Dendritic cell treated with granulocyte-macrophage colony-stimulating factor and Interleukin-4, amounts not matched to agents 40 ng/mL and 50 ng/mL, for 4 days (primary cell): ENCODE measurements at regions of chr20 and their contacts with region 1.

Region 1: GRCh38 chr20:46307139-46307998 is 929 bp downstream of the CDH22 start:
- H3K4me3 Mint-ChIP-seq: no peak overlapping the region
- H3K27ac Mint-ChIP-seq: no peak overlapping the region
- H3K4me1 Mint-ChIP-seq: peaks cover 9% of the 10 kb centered on the region
- H3K27me3 Mint-ChIP-seq: peaks cover 84% of the 10 kb centered on the region

Region 2: DNA sequence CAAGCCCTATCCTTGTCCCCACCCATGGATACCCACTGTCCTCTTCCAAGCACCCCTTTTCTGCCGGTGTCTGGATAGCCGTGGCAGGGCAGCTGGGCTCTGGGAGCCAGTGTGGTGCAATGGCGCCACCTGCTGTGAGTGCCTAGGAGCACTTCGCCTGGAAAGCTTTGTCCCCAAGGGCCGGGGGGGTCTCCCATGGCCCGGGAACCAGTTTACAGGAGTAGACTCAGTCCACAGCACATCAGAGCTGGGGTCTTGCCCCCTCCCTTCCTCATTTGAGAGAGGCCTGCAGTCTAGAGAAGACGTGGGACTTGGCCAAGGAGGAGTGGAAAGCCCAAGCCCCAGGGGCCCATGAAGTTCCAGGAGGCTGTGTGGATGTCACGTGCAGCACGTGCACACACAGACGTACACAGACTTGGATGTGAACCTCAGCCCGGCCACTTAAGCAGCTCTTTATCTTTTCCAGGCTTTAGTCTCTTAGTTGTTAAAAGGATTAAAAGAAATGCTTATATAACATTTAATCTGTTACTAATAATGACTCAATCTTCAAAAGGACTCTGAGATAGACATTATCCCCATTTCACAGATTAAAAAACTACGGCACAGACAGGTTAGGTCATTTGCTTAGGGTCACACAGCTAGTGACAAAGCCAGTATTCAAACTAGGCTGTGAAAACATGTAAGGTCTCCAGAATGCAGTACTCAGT is 41.8 kb after region 1 on chr20:
- intact Hi-C with region 1: loop called (anchors 1 kb)
- H3K4me3 Mint-ChIP-seq: no peak overlapping the region
- H3K27ac Mint-ChIP-seq: no peak overlapping the region
- H3K4me1 Mint-ChIP-seq: peaks cover 54% of the 10 kb centered on the region
- H3K27me3 Mint-ChIP-seq: peaks cover 9% of the 10 kb centered on the region

Region 3: DNA sequence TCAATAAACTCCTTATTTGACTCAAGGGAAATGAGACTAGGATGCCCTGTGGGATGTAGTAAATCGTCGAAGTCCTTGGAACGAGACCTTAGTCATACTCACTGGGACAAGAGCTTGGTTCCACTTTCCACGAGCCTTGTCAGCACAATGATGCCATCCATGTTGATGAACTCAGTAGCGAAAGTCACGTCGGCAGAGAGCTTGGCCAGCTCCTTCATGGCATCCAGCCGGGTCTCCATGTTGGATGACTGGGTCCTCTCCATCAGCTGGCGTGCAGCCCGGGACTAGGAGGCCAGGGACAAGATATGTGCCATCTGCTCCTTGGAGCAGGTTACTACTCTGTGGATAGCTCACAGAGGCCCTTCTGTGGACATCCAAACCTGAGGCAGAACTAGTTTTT is 81.6 kb after region 1 on chr20:
- intact Hi-C with region 1: no loop called
- H3K4me3 Mint-ChIP-seq: no peak overlapping the region
- H3K27ac Mint-ChIP-seq: no peak overlapping the region
- H3K4me1 Mint-ChIP-seq: no peaks in the 10 kb centered on the region
- H3K27me3 Mint-ChIP-seq: no peaks in the 10 kb centered on the region

Region 4: GRCh38 chr20:46438156-46438750 is 130.9 kb after region 1 on chr20:
- intact Hi-C with region 1: loop called (anchors 2 kb)
- H3K4me3 Mint-ChIP-seq: no peak overlapping the region
- H3K27ac Mint-ChIP-seq: no peak overlapping the region
- H3K4me1 Mint-ChIP-seq: no peaks in the 10 kb centered on the region
- H3K27me3 Mint-ChIP-seq: peaks cover 6% of the 10 kb centered on the region

Region 5: DNA sequence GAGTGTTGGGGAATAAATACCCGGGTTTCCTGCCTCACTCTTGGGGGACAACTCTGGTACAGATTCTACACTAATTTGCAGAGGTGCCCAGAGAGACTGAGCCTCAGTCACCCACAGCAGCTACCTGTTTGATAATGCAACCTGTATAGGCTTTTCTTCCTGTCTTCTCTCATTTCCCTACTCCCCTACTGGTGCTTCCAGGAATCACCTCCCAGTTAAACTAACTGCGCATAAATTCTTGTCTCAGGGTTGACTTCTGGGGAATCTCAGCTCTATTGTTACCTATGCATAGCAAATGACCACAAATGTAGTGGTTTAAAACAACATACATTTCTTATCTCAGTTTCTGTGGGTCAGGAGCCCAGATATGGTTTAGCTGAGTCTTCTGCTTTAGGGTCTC is 231.7 kb after region 1 on chr20:
- intact Hi-C with region 1: no loop called
- H3K4me3 Mint-ChIP-seq: no peak overlapping the region
- H3K27ac Mint-ChIP-seq: no peak overlapping the region
- H3K4me1 Mint-ChIP-seq: no peaks in the 10 kb centered on the region
- H3K27me3 Mint-ChIP-seq: peaks cover 55% of the 10 kb centered on the region